Activated CD4-positive, alpha-beta memory T cell treated with anti-CD3 and anti-CD28 coated beads for 36 hours (primary cell): ENCODE measurements at regions of chr1 and their contacts with region 1.

Region 1: DNA sequence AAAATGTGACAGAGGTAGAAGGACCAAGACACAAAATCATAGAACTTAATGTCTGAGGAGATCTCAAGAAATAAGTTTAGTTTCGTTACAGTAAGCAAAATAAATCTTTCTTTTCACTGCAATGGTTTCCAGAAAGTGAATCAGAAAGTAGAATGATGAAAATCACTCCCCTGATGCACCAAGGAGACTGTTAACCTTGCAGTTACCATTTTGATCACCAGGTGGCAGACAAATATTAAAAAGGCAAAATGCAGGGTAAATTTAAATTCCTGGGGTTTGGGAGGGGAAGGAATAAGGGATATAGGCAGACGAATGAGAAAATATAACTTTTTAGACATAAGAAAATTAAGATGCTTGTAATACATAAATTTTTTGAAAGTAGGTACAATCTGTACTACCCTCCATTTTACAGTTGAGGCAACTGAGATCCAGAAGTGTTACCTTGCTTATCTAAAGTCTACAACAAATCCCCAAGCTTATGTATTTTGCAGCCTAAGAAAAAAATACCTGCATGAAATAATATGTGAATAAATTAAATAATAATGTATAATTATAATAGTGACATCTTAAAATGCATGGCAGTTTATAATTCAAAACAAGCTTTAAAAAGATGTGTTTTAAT is 253.2 kb downstream of the CRB1 start:
- DNase-seq: no peak
- H3K4me3 Mint-ChIP-seq: no peak overlapping the region
- H3K27ac Mint-ChIP-seq: no peak overlapping the region
- H3K4me1 Mint-ChIP-seq: peaks cover 6% of the 10 kb centered on the region
- H3K27me3 Mint-ChIP-seq: no peaks in the 10 kb centered on the region

Region 2: DNA sequence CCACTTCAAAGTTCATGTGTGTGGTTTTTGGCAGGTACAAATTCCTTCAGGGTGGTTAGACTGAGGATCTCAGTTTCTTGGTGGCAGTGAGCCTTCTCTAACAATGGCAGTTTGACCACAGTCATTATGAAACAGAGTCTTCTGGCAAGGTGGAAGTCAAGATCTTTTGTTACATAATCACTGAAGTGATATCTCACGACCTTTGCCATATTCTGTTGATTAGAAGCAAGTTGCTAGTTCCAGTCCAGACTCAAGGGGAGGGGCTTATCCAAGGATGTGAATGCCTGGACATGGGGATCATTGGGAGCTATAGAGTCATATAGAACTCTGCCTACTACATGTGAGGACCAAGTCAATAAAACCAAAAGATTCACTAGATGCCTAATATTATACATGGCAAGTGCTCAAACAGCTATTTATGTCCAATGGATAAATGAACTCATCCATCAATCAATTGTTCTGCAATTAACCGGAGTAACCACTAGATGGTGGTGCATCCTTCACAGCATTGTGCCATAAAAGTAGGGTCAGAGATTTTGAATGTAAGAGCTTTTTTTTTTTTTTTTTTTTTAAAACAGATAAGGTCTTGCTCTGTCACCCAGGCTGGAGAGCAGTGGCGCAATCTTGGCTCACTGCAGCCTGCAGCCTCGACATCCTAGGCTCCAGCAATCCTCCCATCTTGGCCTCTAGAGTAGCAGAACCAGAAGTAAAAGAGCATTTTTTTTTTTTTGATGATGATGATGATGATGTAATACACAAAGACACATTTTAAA is 121.3 kb before region 1 on chr1:
- CTCF ChIA-PET with region 1: interaction called, 5 read pairs
- POLR2A ChIA-PET with region 1: no interaction called
- intact Hi-C with region 1: loop called (anchors 2 kb)
- DNase-seq: peak; percentile 17
- H3K4me3 Mint-ChIP-seq: no peak overlapping the region
- H3K27ac Mint-ChIP-seq: no peak overlapping the region
- H3K4me1 Mint-ChIP-seq: peaks cover 2% of the 10 kb centered on the region
- H3K27me3 Mint-ChIP-seq: peaks cover 4% of the 10 kb centered on the region

Region 3: GRCh38 chr1:197692965-197693364 is 171.7 kb after region 1 on chr1:
- CTCF ChIA-PET with region 1: no interaction called
- POLR2A ChIA-PET with region 1: no interaction called
- intact Hi-C with region 1: no loop called
- DNase-seq: no peak
- H3K4me3 Mint-ChIP-seq: no peak overlapping the region
- H3K27ac Mint-ChIP-seq: no peak overlapping the region
- H3K4me1 Mint-ChIP-seq: peaks cover 34% of the 10 kb centered on the region
- H3K27me3 Mint-ChIP-seq: no peaks in the 10 kb centered on the region

Region 4: GRCh38 chr1:197868751-197869489 is 347.7 kb after region 1 on chr1:
- CTCF ChIA-PET with region 1: interaction called, 46 read pairs
- POLR2A ChIA-PET with region 1: no interaction called
- intact Hi-C with region 1: loop called (anchors 1 kb)
- DNase-seq: peak; percentile 50
- H3K4me3 Mint-ChIP-seq: no peak overlapping the region
- H3K27ac Mint-ChIP-seq: no peak overlapping the region
- H3K4me1 Mint-ChIP-seq: no peaks in the 10 kb centered on the region
- H3K27me3 Mint-ChIP-seq: no peaks in the 10 kb centered on the region

Region 5: DNA sequence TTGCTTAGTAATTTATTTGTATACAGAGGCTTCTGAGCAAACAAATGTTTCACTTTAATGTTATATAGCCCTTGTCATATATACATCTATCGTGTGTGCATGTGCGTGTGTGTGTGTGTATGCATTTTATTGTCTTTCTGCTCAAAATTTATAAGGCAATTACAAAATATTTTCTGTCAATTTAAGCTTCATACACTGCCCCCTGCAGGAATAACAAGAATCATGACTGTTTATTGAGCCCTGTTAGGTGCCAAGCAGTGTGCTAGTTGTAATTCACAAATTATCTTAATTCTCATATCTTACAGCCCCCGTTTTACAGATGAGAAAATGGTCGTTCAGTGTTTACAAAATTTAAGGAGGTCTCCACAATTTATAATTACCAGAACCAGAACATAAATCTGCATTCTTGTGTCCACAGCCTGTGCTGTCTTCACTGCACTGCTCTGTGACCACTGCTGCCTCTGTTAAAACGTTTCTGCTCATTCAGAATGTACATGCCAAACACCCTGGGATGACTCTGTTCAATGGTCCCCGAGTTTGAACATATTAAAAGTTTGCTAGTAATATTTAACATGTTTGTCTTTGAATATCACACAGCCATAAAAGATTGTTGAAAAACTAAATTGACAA is 837.9 kb after region 1 on chr1:
- CTCF ChIA-PET with region 1: no interaction called
- POLR2A ChIA-PET with region 1: no interaction called
- intact Hi-C with region 1: loop called (anchors 5 kb)
- DNase-seq: no peak
- H3K4me3 Mint-ChIP-seq: no peak overlapping the region
- H3K27ac Mint-ChIP-seq: no peak overlapping the region
- H3K4me1 Mint-ChIP-seq: peaks cover 8% of the 10 kb centered on the region
- H3K27me3 Mint-ChIP-seq: no peaks in the 10 kb centered on the region